Ovary (tissue), 10 donors: ENCODE measurements at regions of chr5 and their contacts with region 1.

Region 1: DNA sequence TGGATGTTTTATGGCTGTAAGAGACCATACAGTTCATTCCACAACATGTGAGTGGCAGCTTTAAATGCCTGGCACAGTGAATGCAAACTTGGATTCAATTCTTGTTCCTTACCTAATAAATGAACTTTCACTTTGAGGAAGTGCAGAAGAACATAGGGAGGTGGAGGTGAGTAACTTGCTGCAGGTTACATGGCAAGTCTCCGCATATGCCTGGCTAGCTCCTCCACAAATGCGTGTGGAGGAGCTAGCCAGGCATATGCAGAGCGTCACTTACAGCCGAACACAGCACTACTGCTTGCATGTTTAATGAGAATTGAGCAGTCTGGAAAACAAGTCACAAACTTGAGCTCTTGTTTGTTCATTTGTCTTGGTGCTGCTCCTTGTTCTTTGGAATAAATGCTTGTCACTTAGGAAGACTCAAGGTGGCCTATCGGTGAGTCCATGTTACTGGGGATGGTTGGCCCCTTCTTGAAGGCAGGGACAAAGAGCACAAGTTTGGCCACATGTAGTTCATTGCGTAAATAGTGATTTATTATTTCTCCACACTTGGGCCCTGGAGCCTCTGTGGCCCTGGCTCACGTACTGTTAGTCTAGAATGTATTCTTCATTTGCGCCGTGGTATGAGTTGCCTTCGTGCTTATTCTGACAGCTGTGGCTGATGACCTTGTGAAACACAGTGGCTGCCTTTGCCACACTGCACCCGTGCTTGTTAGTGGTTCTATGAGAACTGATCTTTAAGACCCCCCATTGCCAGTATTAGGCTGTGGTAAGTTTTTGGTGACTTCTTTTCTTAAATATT is 3.1 kb downstream of the ISOC1 start:
- DNase-seq: no peak
- H3K4me3 ChIP-seq: no peak overlapping the region
- H3K27ac ChIP-seq: no peak overlapping the region
- H3K4me1 ChIP-seq: peaks cover 6% of the 10 kb centered on the region
- H3K27me3 ChIP-seq: no peaks in the 10 kb centered on the region
- CTCF ChIP-seq: no peak
- EP300 ChIP-seq: no peak
- POLR2A ChIP-seq: no peak

Region 2: GRCh38 chr5:128962211-128962610 is 135.5 kb before region 1 on chr5:
- intact Hi-C with region 1: no loop called
- DNase-seq: no peak
- H3K4me3 ChIP-seq: no peak overlapping the region
- H3K27ac ChIP-seq: no peak overlapping the region
- H3K4me1 ChIP-seq: no peaks in the 10 kb centered on the region
- H3K27me3 ChIP-seq: no peaks in the 10 kb centered on the region
- CTCF ChIP-seq: no peak
- EP300 ChIP-seq: no peak
- POLR2A ChIP-seq: no peak

Region 3: DNA sequence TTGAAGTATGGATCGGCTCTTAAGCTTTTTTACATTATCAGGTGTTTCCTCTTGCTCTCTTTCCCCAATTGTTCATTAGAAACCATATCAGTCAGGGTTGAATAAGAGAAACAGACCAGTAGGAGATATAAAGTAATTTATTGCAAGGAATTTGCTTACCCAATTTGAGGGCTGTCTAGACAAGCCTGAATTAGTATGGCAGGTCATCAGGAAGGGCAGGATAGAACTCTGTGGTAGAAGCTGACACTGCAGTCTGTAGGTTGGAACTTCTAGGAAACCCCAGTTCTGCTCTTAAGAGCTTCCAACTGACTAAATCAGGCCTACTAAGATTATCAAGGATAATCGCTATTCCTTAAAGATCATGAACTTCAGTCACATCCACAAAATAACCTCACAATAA is 21.1 kb after region 1 on chr5:
- intact Hi-C with region 1: loop called in 1 of 4 experiments (anchors 1 kb)
- DNase-seq: no peak
- H3K4me3 ChIP-seq: no peak overlapping the region
- H3K27ac ChIP-seq: no peak overlapping the region
- H3K4me1 ChIP-seq: no peaks in the 10 kb centered on the region
- H3K27me3 ChIP-seq: no peaks in the 10 kb centered on the region
- CTCF ChIP-seq: no peak
- EP300 ChIP-seq: no peak
- POLR2A ChIP-seq: no peak